Dorsolateral prefrontal cortex (tissue), 120 donors: ENCODE measurements at regions of chr17 and their contacts with region 1.

Region 1: GRCh38 chr17:7045909-7046724 is 2.2 kb upstream of the SLC16A11 start:
- DNase-seq: peak in 8 of 10 donors; percentile 36 to 83 (median 73)
- H3K4me3 ChIP-seq: peak overlapping the region in 53 of 59 donors; percentile 1 to 57 (median 34)
- H3K27ac ChIP-seq: peak overlapping the region in 58 of 59 donors; percentile 13 to 98 (median 78)
- H3K27me3 ChIP-seq: peaks cover 0 to 51% (median 6%) of the 10 kb centered on the region in 45 donors
- CTCF ChIP-seq: peak; percentile 61 to 95 (median 85)

Region 2: DNA sequence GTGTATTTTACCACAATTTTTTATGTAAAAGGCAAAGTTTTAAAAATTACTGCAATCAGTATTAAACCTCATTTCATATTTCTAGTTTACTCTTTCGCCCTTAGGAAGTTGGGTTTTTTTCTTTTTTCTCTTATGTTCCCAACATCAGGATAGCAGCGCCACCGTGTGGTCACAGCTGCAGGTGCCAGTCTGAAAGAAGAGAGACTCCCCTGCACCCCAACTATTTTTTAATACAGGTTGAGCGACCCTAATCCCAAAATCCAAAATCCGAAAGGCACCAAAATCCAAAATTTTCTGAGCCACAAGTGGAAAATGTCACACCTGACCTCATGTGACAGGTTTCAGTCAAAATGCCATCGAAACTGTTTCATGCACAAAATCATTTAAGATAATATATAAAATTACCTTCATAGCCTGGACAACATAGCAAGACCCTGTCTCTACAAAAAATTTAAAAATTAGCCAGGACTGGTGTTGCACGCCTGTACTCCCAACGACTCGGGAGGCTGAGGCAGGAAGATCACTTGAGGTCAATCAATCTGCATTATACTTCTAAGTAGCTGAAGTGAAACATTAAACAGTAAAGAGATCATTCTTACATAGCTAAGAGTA is 90.3 kb after region 1 on chr17:
- intact Hi-C with region 1: loop called in 1 of 2 experiments (anchors 1 kb)
- DNase-seq: peak; percentile 56 to 83 (median 72)
- H3K4me3 ChIP-seq: peak overlapping the region in 44 of 59 donors; percentile 6 to 52 (median 30)
- H3K27ac ChIP-seq: no peak overlapping the region
- H3K27me3 ChIP-seq: peaks cover 0 to 37% (median 3%) of the 10 kb centered on the region in 45 donors
- CTCF ChIP-seq: peak; percentile 83 to 98 (median 95)

Region 3: DNA sequence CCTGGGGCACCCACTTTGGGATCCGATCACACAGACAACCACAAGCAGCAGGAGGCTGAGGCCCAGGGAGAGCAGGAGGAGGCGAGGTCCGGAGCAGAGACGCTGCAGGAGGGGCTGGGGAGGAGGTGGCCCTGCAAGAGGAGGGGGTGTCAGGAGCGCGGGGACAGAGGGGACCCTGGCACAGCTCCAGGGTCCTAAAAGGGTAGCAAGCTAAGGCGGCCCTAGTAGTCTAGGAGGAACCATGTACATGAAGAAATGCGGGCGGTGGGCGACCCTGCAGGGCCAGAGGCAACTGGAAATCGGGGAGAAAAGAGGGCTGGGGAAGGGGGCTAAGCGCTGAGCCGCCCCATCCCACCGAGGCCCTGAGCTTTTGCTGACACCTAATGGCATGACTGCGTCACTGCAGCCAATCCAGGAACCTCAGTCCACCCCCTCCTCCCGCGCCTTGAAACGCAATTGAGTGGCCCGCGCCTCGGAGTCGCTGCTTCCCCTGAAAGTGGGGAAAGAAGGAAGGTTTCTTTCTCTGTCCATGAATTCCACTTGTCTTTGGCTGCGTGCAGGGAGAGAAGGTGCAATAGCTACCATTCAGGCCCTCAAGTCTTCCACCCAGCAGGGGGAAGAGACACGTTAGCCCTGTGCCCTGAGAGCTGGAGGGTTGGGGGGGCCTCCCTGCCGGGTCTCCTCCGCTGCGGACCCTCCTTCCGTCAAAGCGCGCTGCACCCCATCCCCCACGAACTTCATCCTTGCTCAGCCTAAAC is 131.3 kb after region 1 on chr17:
- intact Hi-C with region 1: loop called (anchors 5 kb)
- DNase-seq: peak; percentile 42 to 84 (median 79)
- H3K4me3 ChIP-seq: peak overlapping the region; percentile 14 to 71 (median 53)
- H3K27ac ChIP-seq: peak overlapping the region in 35 of 59 donors; percentile 18 to 86 (median 59)
- H3K27me3 ChIP-seq: peaks cover 0 to 5% (median 0%) of the 10 kb centered on the region in 45 donors
- CTCF ChIP-seq: peak; percentile 58 to 88 (median 81)

Region 4: GRCh38 chr17:7296189-7296902 is 250.2 kb after region 1 on chr17:
- intact Hi-C with region 1: loop called in 1 of 2 experiments (anchors 5 kb)
- DNase-seq: peak in 9 of 10 donors; percentile 58 to 89 (median 75)
- H3K4me3 ChIP-seq: peak overlapping the region in 57 of 59 donors; percentile 10 to 58 (median 39)
- H3K27ac ChIP-seq: peak overlapping the region in 8 of 59 donors; percentile 0 to 59 (median 32)
- H3K27me3 ChIP-seq: peaks cover 0 to 47% (median 18%) of the 10 kb centered on the region in 45 donors
- CTCF ChIP-seq: peak; percentile 58 to 99 (median 95)